HEK293T (cell line): ENCODE measurements at regions of chr10 and their contacts with region 1.

Region 1: GRCh38 chr10:102615361-102615760 is 28.9 kb upstream of the TRIM8 start:
- DNase-seq: peak; percentile 66

Region 2: DNA sequence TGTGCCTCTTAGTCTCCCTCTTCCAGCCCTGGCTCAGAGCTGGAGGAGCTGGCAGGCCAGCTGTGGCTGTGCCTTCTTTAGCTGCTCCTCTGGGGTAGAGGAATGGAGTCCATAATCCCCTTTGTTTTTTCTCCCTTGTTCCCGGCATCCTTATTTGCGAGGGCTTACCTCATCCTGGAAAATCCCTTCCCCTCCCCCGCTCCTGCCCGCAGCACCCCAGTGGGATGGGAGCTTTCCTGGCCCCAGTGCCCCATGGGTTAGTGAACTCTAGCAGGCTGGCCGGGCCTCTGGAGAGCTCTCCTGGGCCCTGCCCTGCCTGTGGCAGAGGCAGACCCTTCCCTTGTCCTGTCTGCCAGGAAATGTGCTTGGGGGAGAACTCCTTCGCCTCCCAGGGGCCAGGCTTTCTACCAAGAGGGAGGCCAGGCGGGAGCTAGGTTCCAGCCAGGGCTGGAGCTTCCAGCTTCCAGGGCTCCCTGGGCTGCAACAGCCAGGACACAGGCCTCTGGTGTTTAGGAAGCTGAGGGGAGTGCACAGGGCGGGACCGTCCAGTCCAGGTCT is 12.5 kb after region 1 on chr10:
- CTCF ChIA-PET with region 1: interaction called, 15 read pairs
- POLR2A ChIA-PET with region 1: no interaction called
- DNase-seq: no peak

Region 3: DNA sequence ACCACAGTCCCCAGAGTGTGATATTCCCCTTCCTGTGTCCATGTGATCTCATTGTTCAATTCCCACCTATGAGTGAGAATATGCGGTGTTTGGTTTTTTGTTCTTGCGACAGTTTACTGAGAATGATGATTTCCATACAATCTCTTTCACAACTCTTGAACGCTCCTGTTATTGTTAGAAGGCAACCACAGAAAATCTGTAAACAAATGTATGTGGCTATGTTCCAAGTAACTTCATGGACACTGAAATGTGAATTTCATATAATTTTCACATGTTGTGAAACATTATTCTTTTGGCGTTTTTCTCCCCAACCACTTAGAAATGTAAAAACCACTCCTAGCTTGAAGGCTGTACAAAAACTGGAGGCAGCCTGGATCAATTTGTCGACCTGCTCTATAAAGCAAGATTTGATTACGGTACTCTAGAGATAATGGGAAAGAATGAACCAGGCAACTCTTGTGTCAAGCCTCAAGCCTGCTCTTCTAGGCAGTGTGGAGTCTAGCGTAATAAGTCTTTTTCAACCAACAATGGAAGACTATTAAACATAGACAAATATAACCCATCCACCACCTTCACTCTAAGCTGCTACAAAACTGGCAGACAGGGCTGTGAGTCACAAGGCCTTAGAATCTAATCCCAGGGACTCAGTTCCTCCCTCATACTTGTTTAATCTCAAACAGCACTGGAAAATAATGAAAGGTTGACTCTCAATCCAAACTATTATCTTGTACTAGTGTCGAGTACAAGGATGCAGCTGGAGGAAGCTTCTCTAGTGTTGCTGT is 76.1 kb after region 1 on chr10:
- CTCF ChIA-PET with region 1: no interaction called
- POLR2A ChIA-PET with region 1: no interaction called
- DNase-seq: no peak

Region 4: DNA sequence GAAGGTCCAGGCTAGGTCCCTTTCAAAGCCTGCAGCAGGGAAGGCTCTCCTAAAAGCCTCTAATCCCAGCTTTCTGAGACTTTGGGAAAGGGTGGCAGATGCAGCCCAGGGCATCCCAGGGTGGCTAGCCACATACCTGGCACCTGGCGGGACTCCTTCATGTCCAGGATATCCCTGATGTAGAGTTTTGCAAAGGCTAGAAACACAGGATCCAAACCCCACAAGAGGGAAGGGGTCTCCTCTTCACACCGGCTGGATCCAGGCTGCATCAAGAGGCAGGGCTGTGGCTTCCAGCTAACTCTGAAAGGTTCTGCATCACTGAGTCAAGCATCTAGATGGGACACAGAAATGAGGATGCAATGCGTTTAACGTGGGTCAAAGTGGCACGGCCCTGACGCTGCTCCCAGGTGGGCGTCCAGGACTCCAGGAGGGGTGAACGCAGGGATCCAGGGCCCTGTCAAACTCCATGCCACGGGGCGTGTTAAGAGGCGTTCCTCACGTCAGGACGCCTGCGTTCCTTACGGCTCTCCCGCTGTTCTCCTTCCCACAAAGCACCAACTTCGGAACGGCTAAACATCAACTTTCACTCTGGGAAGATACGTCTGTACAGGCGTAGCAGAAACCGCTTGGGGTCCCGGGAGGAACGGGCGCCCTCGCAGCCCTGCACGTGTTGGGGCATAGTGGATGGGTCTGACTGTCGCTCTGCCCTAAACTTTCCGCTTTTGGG is 1302.1 kb after region 1 on chr10:
- CTCF ChIA-PET with region 1: no interaction called
- POLR2A ChIA-PET with region 1: no interaction called
- DNase-seq: peak; percentile 55